ENCODE measurements at regions of chr6 and their contacts with region 1.

Region 1: GRCh38 chr6:36759148-36759759 is 61.6 kb downstream of the RAB44 start:
- DNase-seq: peak; percentile 80
- ATAC-seq: peak; percentile 80 to 88

Region 2: GRCh38 chr6:36615018-36615761 is 144.1 kb before region 1 on chr6:
- intact Hi-C with region 1: loop called (anchors 10 kb)
- DNase-seq: peak; percentile 60
- ATAC-seq: peak; percentile 57 to 68

Region 3: GRCh38 chr6:36623547-36624459 is 135.5 kb before region 1 on chr6:
- intact Hi-C with region 1: loop called (anchors 10 kb)
- DNase-seq: peak; percentile 87
- ATAC-seq: peak; percentile 58 to 68

Measured in left cardiac atrium (tissue), 4 donors.